Heart left ventricle (tissue), 16 donors: ENCODE measurements at regions of chr12 and their contacts with region 1.

Region 1: GRCh38 chr12:110826592-110827200 is 20.1 kb upstream of the CCDC63 start:
- DNase-seq: peak; percentile 81 to 92 (median 84)
- ATAC-seq: peak; percentile 70 to 97 (median 95)
- H3K4me3 ChIP-seq: peak overlapping the region in 9 of 12 donors; percentile 13 to 47 (median 28)
- H3K27ac ChIP-seq: no peak overlapping the region
- H3K4me1 ChIP-seq: peaks cover 0 to 13% (median under 1%) of the 10 kb centered on the region in 12 donors
- H3K27me3 ChIP-seq: no peaks in the 10 kb centered on the region
- CTCF ChIP-seq: peak; percentile 67 to 86 (median 80)
- POLR2A ChIP-seq: no peak

Region 2: DNA sequence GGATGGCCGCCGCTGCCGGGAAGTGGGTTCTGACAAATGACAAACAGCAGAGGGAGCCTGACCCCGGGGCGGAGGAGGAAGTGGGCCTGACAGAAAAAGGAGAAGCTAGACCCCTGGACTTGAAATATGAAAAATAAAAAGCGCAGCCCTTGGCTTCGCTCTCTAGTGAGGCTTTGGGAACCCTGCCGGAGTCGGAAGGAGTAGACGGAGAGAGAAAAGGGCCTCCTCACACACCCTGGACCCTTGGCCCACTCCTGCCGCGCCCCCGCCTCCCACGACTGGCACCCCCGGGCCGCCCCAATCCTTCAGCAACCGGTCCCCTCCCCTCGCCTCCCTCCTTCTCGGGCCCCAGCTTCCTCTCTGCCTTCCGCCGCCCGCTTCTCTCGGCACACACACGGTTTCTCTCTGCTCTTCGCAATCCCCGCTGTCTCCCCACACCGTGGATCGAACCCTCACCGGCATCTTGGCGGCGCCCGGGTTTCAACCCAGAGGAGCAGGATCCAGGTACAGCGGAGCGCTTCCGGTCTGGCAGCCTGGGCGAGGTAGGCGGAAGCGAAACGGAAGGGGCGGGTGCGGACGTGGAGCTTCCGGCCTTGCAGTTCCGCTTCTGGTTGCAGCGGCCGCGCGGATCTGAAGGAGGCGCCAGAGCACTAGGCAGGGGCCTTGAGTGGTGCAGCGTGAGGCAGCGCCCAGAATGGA is 376.7 kb before region 1 on chr12 and contains the start of gene ARPC3:
- intact Hi-C with region 1: loop called in 4 of 10 experiments (anchors 5 to 10 kb)
- DNase-seq: peak; percentile 94 to 97 (median 95)
- ATAC-seq: peak; percentile 98 to 99 (median 99)
- H3K4me3 ChIP-seq: peak within 1 kb of the TSS; percentile 62 to 96 (median 85)
- H3K27ac ChIP-seq: peak within 1 kb of the TSS; percentile 74 to 99 (median 92)
- H3K4me1 ChIP-seq: peaks cover 0 to 46% (median 14%) of the 10 kb centered on the region in 12 donors
- H3K27me3 ChIP-seq: no peaks in the 10 kb centered on the region
- CTCF ChIP-seq: peak; percentile 76 to 96 (median 86)
- POLR2A ChIP-seq: peak in 1 of 2 donors; percentile 73
- total RNA-seq, gene ARPC3: 77.2 to 251 (median 108) TPM

Region 3: GRCh38 chr12:110600254-110600653 is 226.4 kb before region 1 on chr12:
- intact Hi-C with region 1: loop called in 2 of 10 experiments (anchors 5 to 10 kb)
- DNase-seq: no peak
- ATAC-seq: peak in 3 of 4 donors; percentile 52 to 61 (median 58)
- H3K4me3 ChIP-seq: no peak overlapping the region
- H3K27ac ChIP-seq: no peak overlapping the region
- H3K4me1 ChIP-seq: peaks cover 0 to 25% (median 0%) of the 10 kb centered on the region in 12 donors
- H3K27me3 ChIP-seq: no peaks in the 10 kb centered on the region
- CTCF ChIP-seq: peak in 11 of 12 donors; percentile 15 to 55 (median 43)
- POLR2A ChIP-seq: no peak

Region 4: DNA sequence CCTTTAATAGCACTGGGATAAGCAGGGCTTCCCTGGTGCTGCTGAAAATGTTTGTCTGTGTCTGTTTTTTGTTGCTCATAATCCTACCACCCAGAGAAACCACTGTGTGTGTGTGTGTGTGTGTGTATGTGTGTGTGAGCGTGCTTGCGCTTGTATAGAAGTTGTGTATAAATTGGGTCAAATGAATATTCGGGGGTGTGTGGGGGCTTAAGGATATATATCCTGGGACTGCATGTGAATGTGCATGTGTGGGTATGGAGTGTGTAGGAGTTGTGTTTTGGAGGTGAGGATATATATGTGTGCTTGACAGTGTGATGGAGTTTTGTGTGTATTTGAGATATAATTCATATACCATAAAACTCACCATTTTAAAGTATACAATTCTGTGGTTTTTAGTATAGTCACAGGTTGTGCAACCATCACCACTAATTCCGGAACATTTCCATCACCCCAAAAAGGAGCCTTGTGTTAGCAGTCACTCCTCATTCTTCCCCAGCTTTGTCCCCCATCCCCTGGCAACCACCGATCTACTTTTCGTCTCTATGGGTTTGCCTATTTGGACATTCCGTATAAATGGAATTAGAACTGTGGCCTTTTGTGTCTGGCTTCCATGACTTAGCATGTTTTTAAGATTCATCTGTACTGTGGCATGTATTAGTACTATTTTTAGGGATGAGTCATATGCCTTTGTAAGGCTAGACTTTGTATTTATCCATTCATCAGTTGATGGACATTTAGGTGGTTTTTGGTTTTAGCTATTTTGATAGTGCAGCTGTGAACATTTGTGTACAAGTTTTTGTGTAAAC is 187.2 kb before region 1 on chr12:
- intact Hi-C with region 1: loop called in 1 of 10 experiments (anchors 10 kb)
- DNase-seq: no peak
- ATAC-seq: peak in 3 of 4 donors; percentile 38 to 54 (median 52)
- H3K4me3 ChIP-seq: no peak overlapping the region
- H3K27ac ChIP-seq: peak overlapping the region in 10 of 12 donors; percentile 10 to 80 (median 64)
- H3K4me1 ChIP-seq: peaks cover 0 to 35% (median 20%) of the 10 kb centered on the region in 12 donors
- H3K27me3 ChIP-seq: no peaks in the 10 kb centered on the region
- CTCF ChIP-seq: no peak
- POLR2A ChIP-seq: no peak

Region 5: DNA sequence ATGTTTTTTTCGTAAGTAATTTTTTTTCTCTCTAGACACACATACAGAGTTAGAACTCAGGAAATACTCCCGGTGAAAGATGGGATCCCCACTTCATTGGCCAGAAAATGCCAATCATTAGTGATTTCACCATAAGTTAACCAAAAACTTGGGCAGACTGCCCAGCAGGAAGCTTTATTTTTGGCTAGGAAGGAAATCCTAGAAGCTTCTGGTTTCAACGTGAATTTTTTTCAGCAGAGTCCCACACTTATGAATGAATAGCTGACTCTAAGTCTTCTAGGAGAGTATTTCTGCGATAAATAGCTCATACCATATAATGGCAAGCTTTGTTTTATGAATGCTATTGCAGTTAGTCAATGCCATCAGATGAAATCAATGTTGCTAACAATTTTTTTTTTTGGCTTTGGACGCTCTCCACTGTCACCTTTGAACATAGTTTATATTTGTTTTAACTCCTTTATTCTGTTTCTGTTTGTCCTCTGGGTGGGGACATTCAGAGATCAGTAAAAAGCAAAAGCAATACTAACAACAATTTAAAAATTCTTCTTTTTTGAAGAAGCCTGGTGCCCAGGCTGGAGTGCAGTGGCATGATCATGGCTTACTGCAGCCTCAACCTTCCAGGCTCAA is 93.5 kb before region 1 on chr12:
- intact Hi-C with region 1: loop called in 2 of 10 experiments (anchors 5 to 10 kb)
- DNase-seq: peak in 2 of 5 donors; percentile 24 to 34
- ATAC-seq: peak in 1 of 4 donors; percentile 31
- H3K4me3 ChIP-seq: peak overlapping the region in 1 of 12 donors; percentile 9
- H3K27ac ChIP-seq: peak overlapping the region in 4 of 12 donors; percentile 1 to 17 (median 5)
- H3K4me1 ChIP-seq: peaks cover 15 to 66% (median 43%) of the 10 kb centered on the region in 12 donors
- H3K27me3 ChIP-seq: no peaks in the 10 kb centered on the region
- CTCF ChIP-seq: no peak
- POLR2A ChIP-seq: no peak

Region 6: DNA sequence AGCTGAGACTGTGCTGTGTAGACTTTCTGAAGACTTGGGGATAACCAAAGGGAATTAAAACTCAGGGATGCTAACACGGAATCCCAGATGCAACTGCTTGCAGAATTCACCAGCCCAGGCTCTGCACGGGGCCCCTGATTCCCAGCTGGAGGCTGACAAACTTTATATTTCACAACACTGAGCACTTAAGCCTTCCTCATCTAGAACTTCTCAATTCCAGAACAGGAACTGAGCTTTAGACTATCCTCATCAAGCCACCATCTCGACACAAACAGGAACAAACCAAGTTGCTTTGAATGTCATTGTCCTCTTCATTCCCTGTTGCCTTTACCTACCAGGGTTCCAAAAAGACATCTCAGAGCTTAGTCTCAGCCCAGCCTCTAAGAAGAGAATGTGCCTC is 42.3 kb after region 1 on chr12:
- intact Hi-C with region 1: no loop called
- DNase-seq: no peak
- ATAC-seq: peak in 2 of 4 donors; percentile 57 to 73
- H3K4me3 ChIP-seq: no peak overlapping the region
- H3K27ac ChIP-seq: peak overlapping the region in 1 of 12 donors; percentile 81
- H3K4me1 ChIP-seq: peaks cover 0 to 5% (median 0%) of the 10 kb centered on the region in 12 donors
- H3K27me3 ChIP-seq: no peaks in the 10 kb centered on the region
- CTCF ChIP-seq: no peak
- POLR2A ChIP-seq: no peak